Dendritic cell treated with granulocyte-macrophage colony-stimulating factor and Interleukin-4, amounts not matched to agents 40 ng/mL and 50 ng/mL, for 4 days (primary cell): ENCODE measurements at regions of chr2 and their contacts with region 1.

Region 1: GRCh38 chr2:171160119-171160955 is at the start of gene TLK1:
- H3K4me3 Mint-ChIP-seq: peak within 1 kb of the TSS; percentile 86
- H3K27ac Mint-ChIP-seq: peak within 1 kb of the TSS; percentile 94
- H3K4me1 Mint-ChIP-seq: peaks cover 48% of the 10 kb centered on the region
- H3K27me3 Mint-ChIP-seq: no peaks in the 10 kb centered on the region

Region 2: GRCh38 chr2:170928824-170929685 is 231.3 kb before region 1 on chr2 and contains the start of gene GORASP2:
- intact Hi-C with region 1: loop called (anchors 5 kb)
- H3K4me3 Mint-ChIP-seq: peak within 1 kb of the TSS; percentile 89
- H3K27ac Mint-ChIP-seq: peak within 1 kb of the TSS; percentile 91
- H3K4me1 Mint-ChIP-seq: peaks cover 31% of the 10 kb centered on the region
- H3K27me3 Mint-ChIP-seq: no peaks in the 10 kb centered on the region

Region 3: DNA sequence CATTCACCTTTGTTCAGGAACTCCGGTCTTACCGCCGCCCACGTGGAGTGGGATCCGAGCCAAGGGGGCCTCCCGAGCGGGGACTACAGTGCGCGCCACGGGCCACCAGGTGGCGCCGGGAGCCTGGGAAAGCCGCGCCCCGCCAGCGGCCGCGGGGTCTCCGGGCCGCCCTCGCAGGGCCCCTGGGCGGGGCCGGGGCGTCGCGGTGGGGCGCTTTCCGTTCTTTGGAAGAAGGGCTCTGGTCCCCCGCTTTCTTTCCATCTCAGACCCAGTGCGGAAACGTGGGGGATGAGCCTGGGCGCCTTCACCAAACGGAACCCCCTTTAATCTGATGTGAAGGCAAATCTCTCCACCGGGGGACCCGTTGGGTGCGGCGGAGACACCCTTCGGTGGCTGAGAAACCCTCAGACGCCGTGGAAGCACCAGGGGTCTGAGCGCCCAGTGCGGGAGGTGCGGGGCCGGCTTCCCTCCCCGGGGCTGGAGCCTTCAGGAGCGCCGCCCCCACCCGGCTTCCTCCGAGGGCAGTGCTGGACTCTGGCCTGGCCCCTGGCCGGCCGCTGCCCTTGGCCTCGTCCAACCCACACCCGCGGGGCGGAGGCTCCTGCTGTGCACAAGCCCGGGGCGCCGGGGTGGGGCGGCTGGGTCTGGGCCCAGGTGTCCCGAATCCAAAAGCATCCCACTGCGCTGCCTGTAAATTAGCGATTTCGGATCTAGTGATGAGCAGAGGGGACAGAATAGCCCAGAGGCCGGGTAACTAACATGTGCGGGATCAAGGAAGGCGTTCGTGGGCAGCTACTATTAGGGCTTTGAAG is 186.6 kb before region 1 on chr2:
- intact Hi-C with region 1: loop called (anchors 10 kb)
- H3K4me3 Mint-ChIP-seq: peak overlapping the region; percentile 74
- H3K27ac Mint-ChIP-seq: peak overlapping the region; percentile 41
- H3K4me1 Mint-ChIP-seq: peaks cover 14% of the 10 kb centered on the region
- H3K27me3 Mint-ChIP-seq: peaks cover 22% of the 10 kb centered on the region

Region 4: GRCh38 chr2:171225302-171225980 is 65.1 kb after region 1 on chr2:
- intact Hi-C with region 1: no loop called
- H3K4me3 Mint-ChIP-seq: no peak overlapping the region
- H3K27ac Mint-ChIP-seq: no peak overlapping the region
- H3K4me1 Mint-ChIP-seq: peaks cover 5% of the 10 kb centered on the region
- H3K27me3 Mint-ChIP-seq: no peaks in the 10 kb centered on the region

Region 5: DNA sequence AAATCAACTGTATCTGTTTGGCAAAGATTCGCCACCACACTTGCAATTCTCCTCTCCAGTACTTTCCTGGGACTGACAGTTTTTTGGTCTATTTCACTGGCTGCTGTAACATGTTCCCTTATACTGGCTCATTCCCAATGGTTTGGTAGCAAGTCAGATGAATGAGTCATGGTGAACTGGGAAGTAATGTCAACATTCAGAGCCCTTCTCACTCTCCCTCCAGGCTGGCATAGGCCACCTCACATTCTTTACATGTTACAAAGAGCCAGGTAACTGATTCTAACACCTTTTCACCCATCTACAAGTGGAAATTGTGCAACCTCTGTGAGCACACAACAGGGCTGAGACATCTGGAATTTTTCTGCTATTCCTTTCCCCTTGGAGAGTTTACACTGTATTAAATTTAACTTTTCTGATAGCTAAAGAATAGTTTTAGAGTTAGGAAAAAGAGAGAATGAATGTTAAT is 111.7 kb after region 1 on chr2:
- intact Hi-C with region 1: loop called (anchors 5 kb)
- H3K4me3 Mint-ChIP-seq: no peak overlapping the region
- H3K27ac Mint-ChIP-seq: no peak overlapping the region
- H3K4me1 Mint-ChIP-seq: peaks cover 9% of the 10 kb centered on the region
- H3K27me3 Mint-ChIP-seq: no peaks in the 10 kb centered on the region

Region 6: GRCh38 chr2:171416009-171416926 is 255.9 kb after region 1 on chr2:
- intact Hi-C with region 1: loop called (anchors 5 kb)
- H3K4me3 Mint-ChIP-seq: no peak overlapping the region
- H3K27ac Mint-ChIP-seq: no peak overlapping the region
- H3K4me1 Mint-ChIP-seq: peaks cover 12% of the 10 kb centered on the region
- H3K27me3 Mint-ChIP-seq: no peaks in the 10 kb centered on the region

Region 7: DNA sequence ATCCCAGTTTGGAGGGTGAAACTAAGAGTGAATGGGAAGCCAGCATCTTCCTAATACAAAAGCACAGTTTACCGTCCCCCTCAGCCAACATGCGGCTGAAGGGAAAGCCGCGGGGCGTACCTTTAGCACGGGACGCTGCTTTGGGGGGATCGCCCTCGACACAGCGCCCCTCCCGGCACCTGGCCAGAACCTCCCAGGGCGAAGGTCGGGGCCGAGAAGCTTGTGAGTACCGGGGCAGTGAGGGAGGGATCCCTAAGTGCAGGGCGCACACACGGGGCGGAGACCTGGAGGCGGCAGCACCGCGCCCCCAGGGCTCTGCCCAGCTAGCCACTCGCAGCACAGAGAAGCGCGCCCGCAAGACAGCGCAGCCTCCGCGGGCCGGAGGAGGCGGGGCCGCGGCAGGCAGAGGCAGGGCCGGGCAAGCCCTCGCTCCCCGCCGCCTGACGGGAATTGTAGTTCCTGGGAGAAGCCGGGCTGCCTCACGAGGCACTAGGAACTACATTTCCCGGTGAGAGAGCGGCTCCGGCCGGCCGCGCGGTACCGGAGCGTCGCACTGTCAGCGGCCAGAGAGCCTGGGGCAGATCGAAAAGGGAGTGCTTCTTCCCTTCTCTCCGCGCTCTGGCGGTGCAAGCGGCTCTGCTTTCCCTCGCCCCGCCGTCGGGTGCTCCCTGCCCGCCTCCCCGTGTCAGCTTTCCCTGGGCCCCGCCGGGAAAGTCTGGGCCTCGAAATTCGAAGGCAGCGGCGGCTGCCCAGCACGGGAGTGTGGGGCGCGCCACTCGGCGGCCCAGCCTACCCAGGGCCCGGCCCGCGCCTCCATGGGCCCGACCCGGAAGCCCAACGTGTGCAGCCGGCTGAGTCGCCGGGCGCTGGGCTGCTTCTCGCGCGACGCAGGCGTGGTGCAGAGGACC is 273.7 kb after region 1 on chr2 and contains the starts of genes DCAF17 and METTL8:
- intact Hi-C with region 1: loop called (anchors 5 kb)
- H3K4me3 Mint-ChIP-seq: peak within 1 kb of the TSS; percentile 86
- H3K27ac Mint-ChIP-seq: peak within 1 kb of the TSS; percentile 93
- H3K4me1 Mint-ChIP-seq: peaks cover 16% of the 10 kb centered on the region
- H3K27me3 Mint-ChIP-seq: no peaks in the 10 kb centered on the region